PC-9 (cell line): ENCODE measurements at regions of chr1 and their contacts with region 1.

Region 1: DNA sequence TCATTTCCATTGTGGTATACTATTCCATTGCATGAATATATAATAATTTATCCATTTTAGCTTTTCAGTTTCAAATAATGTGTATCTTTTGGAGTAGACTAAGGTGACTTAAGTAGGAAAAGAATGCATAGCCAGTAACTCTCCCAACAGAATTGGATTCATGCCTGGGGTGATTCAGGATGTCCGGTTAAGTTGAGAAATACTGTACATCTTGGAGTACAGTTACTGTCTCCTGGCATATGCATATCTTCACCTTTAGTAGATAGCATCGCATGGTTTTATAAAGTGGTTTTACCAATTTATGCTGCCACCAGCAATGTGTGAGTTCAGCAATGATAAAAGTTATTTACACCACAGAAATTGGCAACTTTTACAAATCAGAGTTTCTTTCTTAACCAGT is 18.6 kb upstream of the SLC6A9 start:
- DNase-seq: peak; percentile 30 to 79
- H3K4me3 ChIP-seq: peak overlapping the region; percentile 38; the same call in 1 of the 2 replicates
- H3K27ac ChIP-seq: peak overlapping the region; percentile 89
- H3K4me1 ChIP-seq: peaks cover 55% of the 10 kb centered on the region
- H3K27me3 ChIP-seq: no peaks in the 10 kb centered on the region
- CTCF ChIP-seq: no peak

Region 2: DNA sequence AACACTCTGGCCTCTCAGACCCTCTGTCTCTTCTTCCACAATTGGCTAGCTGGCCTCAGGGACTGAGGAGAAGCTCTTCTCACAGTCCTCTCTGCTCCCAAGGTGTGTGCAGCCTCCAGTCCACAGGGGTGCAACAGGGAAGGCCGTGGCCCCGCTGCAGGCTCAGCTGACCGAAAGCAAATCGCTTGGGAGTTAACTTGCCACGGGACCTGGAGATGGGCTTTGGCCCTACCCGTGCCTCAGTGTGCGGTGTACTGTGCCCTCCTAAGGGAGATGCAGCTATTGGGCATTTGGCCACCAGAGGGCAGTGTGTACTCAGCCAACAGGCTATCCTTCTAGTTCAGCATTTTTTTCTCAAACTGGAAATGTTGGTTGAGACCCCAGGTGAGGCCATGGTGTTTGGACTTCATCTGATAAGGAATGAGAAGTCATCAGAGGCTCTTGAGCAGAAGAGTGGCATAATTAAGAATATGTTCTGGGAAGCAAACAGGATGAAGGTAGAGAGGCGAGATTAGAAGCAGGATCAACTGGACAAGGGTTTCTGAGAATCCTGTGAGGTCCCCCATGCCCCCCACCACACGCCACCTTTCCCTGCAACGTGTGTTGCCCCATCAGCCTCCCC is 822.6 kb before region 1 on chr1:
- CTCF ChIA-PET with region 1: no interaction called
- POLR2A ChIA-PET with region 1: no interaction called
- intact Hi-C with region 1: loop called (anchors 10 kb)
- DNase-seq: peak; percentile 73 to 88
- H3K4me3 ChIP-seq: no peak overlapping the region
- H3K27ac ChIP-seq: no peak overlapping the region
- H3K4me1 ChIP-seq: peaks cover 16% of the 10 kb centered on the region
- H3K27me3 ChIP-seq: no peaks in the 10 kb centered on the region
- CTCF ChIP-seq: peak; percentile 97

Region 3: GRCh38 chr1:43611950-43612349 is 437.9 kb before region 1 on chr1:
- CTCF ChIA-PET with region 1: no interaction called
- POLR2A ChIA-PET with region 1: no interaction called
- intact Hi-C with region 1: no loop called
- DNase-seq: no peak
- H3K4me3 ChIP-seq: no peak overlapping the region
- H3K27ac ChIP-seq: no peak overlapping the region
- H3K4me1 ChIP-seq: no peaks in the 10 kb centered on the region
- H3K27me3 ChIP-seq: no peaks in the 10 kb centered on the region
- CTCF ChIP-seq: no peak

Region 4: DNA sequence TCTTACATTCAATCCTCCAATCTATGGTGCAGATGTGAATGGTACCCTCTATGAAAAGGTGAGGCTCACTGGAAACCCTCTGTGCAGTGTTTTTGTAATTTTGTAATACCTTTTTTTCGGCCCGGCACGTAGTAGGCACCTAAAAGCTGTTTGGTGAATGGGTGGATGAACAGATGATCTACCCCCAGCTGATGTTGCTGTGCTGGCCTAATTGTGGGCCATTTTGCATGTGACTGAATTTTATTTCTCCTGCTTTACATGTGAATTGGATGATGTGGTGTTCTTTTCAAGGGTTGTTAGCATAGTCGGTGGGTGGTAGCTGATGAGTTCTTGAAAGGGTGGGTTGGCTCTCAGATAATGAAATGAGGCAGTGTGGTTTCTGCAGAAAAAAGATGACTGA is 389.5 kb before region 1 on chr1:
- CTCF ChIA-PET with region 1: no interaction called
- POLR2A ChIA-PET with region 1: no interaction called
- intact Hi-C with region 1: no loop called
- DNase-seq: no peak
- H3K4me3 ChIP-seq: no peak overlapping the region
- H3K27ac ChIP-seq: no peak overlapping the region
- H3K4me1 ChIP-seq: no peaks in the 10 kb centered on the region
- H3K27me3 ChIP-seq: no peaks in the 10 kb centered on the region
- CTCF ChIP-seq: no peak

Region 5: DNA sequence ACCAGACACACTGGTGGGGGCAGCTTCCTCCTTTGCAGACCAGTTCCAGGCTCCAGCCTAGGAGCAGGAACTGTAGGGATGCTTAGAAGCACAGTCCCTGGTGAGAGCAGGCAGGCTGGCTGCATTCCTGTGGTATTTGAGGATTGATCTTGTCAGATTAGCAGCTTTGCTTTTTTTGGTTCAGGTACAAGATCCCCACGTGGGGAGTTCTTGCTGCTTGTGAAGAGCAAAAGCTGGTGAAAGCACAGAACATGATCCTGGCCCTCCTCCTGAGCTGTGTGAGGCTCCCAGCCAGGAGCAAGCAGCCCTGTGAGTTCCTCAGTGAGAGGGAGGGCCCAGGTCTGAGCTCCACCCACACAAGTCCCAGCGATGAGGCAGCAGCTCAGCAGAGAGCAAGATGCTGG is 191.5 kb before region 1 on chr1:
- CTCF ChIA-PET with region 1: no interaction called
- POLR2A ChIA-PET with region 1: no interaction called
- intact Hi-C with region 1: no loop called
- DNase-seq: peak; percentile 92 to 99
- H3K4me3 ChIP-seq: no peak overlapping the region
- H3K27ac ChIP-seq: peak overlapping the region; percentile 61
- H3K4me1 ChIP-seq: peaks cover 39% of the 10 kb centered on the region
- H3K27me3 ChIP-seq: no peaks in the 10 kb centered on the region
- CTCF ChIP-seq: no peak

Region 6: DNA sequence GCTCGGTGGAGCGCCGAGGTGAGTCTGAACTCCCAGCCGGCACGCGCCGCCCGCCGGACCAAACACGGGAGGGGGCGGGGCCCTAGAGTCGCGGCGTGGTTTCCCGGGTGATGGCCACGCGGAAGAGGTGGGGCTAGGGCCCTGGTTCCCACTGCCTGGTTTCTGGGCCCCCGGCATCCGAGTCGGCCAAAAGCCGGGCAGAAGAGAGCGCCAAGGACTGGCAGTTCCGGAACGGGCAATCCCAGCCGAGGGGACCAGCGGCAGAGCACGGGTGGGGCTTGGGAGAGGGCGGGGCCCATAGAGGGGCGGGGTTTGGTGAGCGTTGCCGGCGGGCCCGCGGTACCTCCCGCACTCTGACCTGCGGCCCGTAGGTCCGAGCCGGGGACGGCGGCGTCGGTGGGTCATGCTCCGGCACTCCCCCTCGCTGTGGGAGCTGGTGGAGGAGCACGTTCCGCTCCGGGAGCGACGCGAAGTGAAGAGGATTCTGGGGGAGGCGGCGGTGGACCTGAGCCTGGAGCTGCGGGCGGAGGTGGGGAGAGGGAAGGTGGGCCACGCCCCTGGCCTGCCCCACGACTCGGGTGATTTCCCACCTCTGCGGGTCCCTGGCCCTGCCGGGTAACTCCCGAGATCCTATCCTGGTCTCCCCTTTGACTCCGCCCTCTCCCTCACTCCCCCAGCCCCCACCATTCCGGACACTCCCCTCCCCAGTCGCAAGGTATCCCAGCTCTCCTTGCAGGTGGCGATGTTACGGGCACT is 58.2 kb before region 1 on chr1 and contains the start of gene CCDC24:
- CTCF ChIA-PET with region 1: interaction called, 11 read pairs
- POLR2A ChIA-PET with region 1: interaction called, 3 read pairs
- intact Hi-C with region 1: no loop called
- DNase-seq: peak; percentile 85 to 96
- H3K4me3 ChIP-seq: peak within 1 kb of the TSS; percentile 59
- H3K27ac ChIP-seq: peak within 1 kb of the TSS; percentile 86
- H3K4me1 ChIP-seq: peaks cover 25% of the 10 kb centered on the region
- H3K27me3 ChIP-seq: no peaks in the 10 kb centered on the region
- CTCF ChIP-seq: no peak
- total RNA-seq, gene CCDC24: 47.9 and 56.5 TPM in 2 replicates

Region 7: GRCh38 chr1:44002606-44003157 is 47.2 kb before region 1 on chr1:
- CTCF ChIA-PET with region 1: interaction called, 9 read pairs
- POLR2A ChIA-PET with region 1: interaction called, 4 read pairs
- intact Hi-C with region 1: loop called (anchors 2 kb)
- DNase-seq: no peak
- H3K4me3 ChIP-seq: no peak overlapping the region
- H3K27ac ChIP-seq: no peak overlapping the region
- H3K4me1 ChIP-seq: no peaks in the 10 kb centered on the region
- H3K27me3 ChIP-seq: no peaks in the 10 kb centered on the region
- CTCF ChIP-seq: peak; percentile 33; the same call in 1 of the 2 replicates

Region 8: GRCh38 chr1:44036409-44037139 is 13.3 kb before region 1 on chr1:
- CTCF ChIA-PET with region 1: interaction called, 25 read pairs
- POLR2A ChIA-PET with region 1: no interaction called
- intact Hi-C with region 1: no loop called
- DNase-seq: peak; percentile 59 to 77
- H3K4me3 ChIP-seq: no peak overlapping the region
- H3K27ac ChIP-seq: peak overlapping the region; percentile 20; the same call in 1 of the 2 replicates
- H3K4me1 ChIP-seq: peaks cover 27% of the 10 kb centered on the region
- H3K27me3 ChIP-seq: no peaks in the 10 kb centered on the region
- CTCF ChIP-seq: peak; percentile 89

Region 9: DNA sequence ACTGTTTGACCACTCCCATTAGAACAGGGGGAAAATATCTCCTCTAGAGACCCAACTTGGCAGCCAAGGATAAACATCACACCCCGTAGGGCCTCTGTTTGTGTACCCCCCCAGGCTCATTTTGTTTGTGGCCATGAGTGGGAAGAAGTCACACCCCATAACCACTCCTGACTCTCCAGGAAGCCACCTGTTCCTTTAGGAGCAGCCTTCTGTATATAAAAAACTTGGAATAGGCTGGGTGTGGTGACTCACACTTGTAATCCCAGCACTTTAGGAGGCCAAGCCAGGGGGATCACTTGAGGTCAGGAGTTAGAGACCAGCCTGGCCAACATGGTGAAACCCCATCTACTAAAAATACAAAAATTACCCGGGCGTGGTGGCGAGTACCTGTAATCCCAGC is 10.1 kb after region 1 on chr1:
- CTCF ChIA-PET with region 1: interaction called, 13 read pairs
- POLR2A ChIA-PET with region 1: no interaction called
- intact Hi-C with region 1: no loop called
- DNase-seq: peak in 1 of 2 experiments; percentile 75
- H3K4me3 ChIP-seq: no peak overlapping the region
- H3K27ac ChIP-seq: peak overlapping the region; percentile 80
- H3K4me1 ChIP-seq: peaks cover 36% of the 10 kb centered on the region
- H3K27me3 ChIP-seq: no peaks in the 10 kb centered on the region
- CTCF ChIP-seq: no peak

Region 10: DNA sequence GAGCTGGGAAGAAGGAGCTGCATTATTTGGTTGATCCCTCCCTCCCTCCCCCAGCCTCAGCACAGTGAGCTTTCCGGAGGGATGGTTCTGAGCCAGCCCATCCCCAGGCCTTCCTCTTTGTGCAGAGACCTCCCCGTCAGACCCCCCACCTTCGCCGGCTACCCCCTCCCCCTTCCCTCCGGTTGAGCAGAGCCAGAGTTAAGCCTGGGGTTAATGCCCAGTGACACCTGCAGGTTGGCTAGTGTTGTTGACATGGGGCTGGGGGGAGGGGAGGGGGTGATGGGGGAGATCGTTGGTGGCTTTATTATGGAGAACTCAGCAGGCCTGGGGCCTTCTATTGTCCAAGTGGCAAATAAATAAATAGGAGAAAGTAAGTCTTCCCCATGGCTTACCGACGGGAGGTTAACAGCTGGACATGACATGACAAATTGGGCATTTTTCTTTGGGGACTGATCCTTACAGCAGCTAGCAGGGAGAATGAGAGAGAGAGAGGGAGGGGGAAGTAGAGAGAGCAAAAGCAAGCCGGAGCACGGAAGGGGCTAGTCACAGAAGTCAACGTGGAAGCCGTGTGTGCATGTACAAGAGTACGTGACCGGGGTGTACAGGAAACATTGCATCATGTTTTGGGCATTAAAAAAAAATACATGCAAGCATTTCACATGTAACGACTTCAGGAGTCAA is 493.4 kb after region 1 on chr1:
- CTCF ChIA-PET with region 1: no interaction called
- POLR2A ChIA-PET with region 1: no interaction called
- intact Hi-C with region 1: no loop called
- DNase-seq: no peak
- H3K4me3 ChIP-seq: no peak overlapping the region
- H3K27ac ChIP-seq: no peak overlapping the region
- H3K4me1 ChIP-seq: peaks cover 34% of the 10 kb centered on the region
- H3K27me3 ChIP-seq: no peaks in the 10 kb centered on the region
- CTCF ChIP-seq: no peak